K562 (cell line): ENCODE measurements at regions of chr3 and their contacts with region 1.

Region 1: GRCh38 chr3:9884555-9885165 is 4.6 kb upstream of the CIDEC start:
- DNase-seq: peak; percentile 83 to 86 (median 86)
- ATAC-seq: peak; percentile 92
- H3K4me3 ChIP-seq: no peak overlapping the region
- H3K27ac ChIP-seq: peak overlapping the region; percentile 21; the same call in 1 of the 3 replicates
- H3K4me1 ChIP-seq: peaks cover 8 to 34% of the 10 kb centered on the region in 2 experiments; a peak in 4 of 5 replicates
- H3K27me3 ChIP-seq: no peaks in the 10 kb centered on the region
- CTCF ChIP-seq: 0 out of 6 replicates have a peak, but pooled peaks of 1 of the 3 experiments have one; percentile 8
- EP300 ChIP-seq: peak; percentile 64
- POLR2A ChIP-seq: no peak
- RAD21 ChIP-seq: peak in 1 of 2 experiments; percentile 15; a peak in 1 of 4 replicates

Region 2: DNA sequence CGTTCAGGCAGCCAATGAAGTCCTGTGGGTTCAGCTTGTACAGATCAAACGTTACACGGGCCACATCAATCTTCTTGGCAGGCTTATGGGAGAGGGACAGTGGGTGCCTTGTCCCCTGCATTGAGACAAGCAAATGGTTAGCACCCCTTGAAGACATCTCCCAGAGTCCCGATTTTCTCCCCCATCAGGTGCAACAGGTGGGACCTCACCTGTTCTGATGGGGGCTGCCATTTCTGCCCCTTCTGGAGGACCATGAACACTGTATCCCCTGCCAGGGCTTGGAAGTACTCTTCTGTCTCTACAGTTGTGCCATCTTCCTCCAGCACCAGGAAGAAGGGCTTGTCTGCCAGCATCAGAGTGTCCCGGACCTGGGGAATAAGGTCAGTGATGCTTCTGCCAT is 14.7 kb before region 1 on chr3:
- CTCF ChIA-PET with region 1: no interaction called
- POLR2A ChIA-PET with region 1: interaction called, 10 read pairs
- in situ Hi-C with region 1: no loop called
- intact Hi-C with region 1: no loop called
- DNase-seq: no peak
- ATAC-seq: peak; percentile 18
- H3K4me3 ChIP-seq: no peak overlapping the region
- H3K27ac ChIP-seq: no peak overlapping the region
- H3K4me1 ChIP-seq: peaks cover 0 to 3% of the 10 kb centered on the region in 2 experiments; a peak in 2 of 5 replicates
- H3K27me3 ChIP-seq: no peaks in the 10 kb centered on the region
- CTCF ChIP-seq: no peak
- EP300 ChIP-seq: no peak
- POLR2A ChIP-seq: no peak
- RAD21 ChIP-seq: no peak